Endothelial cell of umbilical vein (primary cell): ENCODE measurements at regions of chr2 and their contacts with region 1.

Region 1: GRCh38 chr2:144332356-144333142 is 187.4 kb downstream of the ZEB2 start:
- DNase-seq: peak; percentile 88
- H3K4me3 ChIP-seq: peak overlapping the region; percentile 49 to 71 (median 60)
- H3K27ac ChIP-seq: peak overlapping the region; percentile 85
- H3K4me1 ChIP-seq: peaks cover 15% of the 10 kb centered on the region
- H3K27me3 ChIP-seq: no peaks in the 10 kb centered on the region
- CTCF ChIP-seq: no peak
- POLR2A ChIP-seq: peak; percentile 79

Region 2: DNA sequence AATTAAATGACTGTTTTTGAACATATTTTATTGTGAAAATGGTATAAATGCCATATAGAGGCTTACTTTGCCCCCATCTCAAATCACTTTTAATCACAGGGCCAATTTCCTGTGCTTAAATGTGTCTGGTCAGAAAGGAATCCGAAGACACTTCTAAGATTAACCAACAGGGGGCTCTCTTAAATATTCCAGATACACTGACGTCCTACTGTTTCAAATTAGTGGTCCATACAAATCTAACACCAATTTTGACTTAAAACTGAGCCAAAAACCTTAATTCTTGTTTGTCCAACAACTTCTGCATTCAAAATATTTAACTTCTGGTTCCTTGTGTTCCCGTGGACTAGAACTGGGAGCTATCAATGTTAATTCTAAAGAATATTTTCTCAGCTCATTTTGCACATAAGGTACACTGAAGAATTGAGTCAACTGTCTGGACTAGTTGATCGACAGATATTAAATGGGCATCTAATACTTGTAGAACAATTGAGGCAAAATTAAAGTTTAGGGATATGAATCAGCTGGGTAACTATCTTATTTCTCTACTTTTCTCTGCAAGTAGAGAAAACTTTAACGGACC is 645.9 kb before region 1 on chr2:
- CTCF ChIA-PET with region 1: no interaction called
- POLR2A ChIA-PET with region 1: no interaction called
- dilution Hi-C with region 1: no loop called
- intact Hi-C with region 1: loop called (anchors 1 kb)
- DNase-seq: peak; percentile 60
- H3K4me3 ChIP-seq: no peak overlapping the region
- H3K27ac ChIP-seq: no peak overlapping the region
- H3K4me1 ChIP-seq: no peaks in the 10 kb centered on the region
- H3K27me3 ChIP-seq: no peaks in the 10 kb centered on the region
- CTCF ChIP-seq: peak; percentile 32 to 52
- POLR2A ChIP-seq: no peak

Region 3: DNA sequence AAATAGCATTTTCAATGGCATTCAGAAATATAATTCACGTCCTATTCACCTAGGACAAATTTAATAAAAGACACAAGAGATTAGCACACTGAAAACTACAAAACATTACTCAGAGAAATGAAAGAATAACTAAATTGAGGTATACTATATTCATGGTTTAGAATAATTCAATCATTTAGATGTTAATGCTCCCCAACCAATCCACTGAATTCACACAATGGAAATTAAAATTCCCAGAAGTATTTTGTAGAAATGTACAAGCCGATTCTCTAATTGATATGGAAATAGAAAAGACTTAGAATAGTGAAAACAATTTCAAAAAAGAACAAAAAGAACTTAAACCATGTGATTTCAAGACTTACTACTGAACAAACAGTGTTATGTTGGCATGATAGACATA is 24.8 kb before region 1 on chr2:
- CTCF ChIA-PET with region 1: no interaction called
- POLR2A ChIA-PET with region 1: no interaction called
- dilution Hi-C with region 1: no loop called
- intact Hi-C with region 1: no loop called
- DNase-seq: no peak
- H3K4me3 ChIP-seq: no peak overlapping the region
- H3K27ac ChIP-seq: no peak overlapping the region
- H3K4me1 ChIP-seq: no peaks in the 10 kb centered on the region
- H3K27me3 ChIP-seq: no peaks in the 10 kb centered on the region
- CTCF ChIP-seq: no peak
- POLR2A ChIP-seq: no peak

Region 4: DNA sequence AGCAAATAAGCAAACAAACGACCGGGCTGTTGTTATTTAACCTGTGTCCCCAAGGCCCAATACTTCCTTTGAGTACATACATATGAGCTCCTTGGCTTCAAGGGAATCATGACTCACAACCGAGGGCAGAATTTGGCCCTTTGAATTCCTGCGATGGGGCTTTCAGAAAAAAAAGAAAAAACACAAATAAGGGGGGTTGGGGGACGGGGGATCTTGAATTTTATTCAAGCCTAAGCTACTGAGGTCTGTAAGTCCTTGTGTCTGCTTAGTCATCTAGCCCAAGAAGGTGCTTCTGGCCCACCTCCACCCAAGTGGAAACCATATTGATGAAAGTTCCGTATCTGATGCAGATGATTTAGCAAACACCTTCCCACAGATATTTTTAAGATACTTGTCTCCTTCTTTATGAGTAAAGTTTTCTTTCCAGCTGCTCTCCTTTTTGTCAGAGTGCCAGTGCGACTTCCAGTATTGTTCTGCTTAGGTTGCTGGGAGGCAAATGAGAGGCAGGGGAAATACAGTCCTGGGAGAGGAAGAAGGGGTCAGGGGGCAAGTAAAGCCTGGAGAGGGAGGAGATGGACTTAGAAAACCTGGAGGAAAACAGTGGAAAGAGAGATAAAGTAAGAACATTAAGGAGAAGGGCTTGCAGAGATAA is 17.7 kb after region 1 on chr2:
- CTCF ChIA-PET with region 1: no interaction called
- POLR2A ChIA-PET with region 1: no interaction called
- dilution Hi-C with region 1: no loop called
- intact Hi-C with region 1: loop called (anchors 1 kb)
- DNase-seq: peak; percentile 99
- H3K4me3 ChIP-seq: peak overlapping the region in 2 of 3 experiments; percentile 0 to 9
- H3K27ac ChIP-seq: peak overlapping the region; percentile 79
- H3K4me1 ChIP-seq: peaks cover 32% of the 10 kb centered on the region
- H3K27me3 ChIP-seq: no peaks in the 10 kb centered on the region
- CTCF ChIP-seq: no peak
- POLR2A ChIP-seq: no peak

Region 5: GRCh38 chr2:144357623-144358373 is 25.2 kb after region 1 on chr2:
- CTCF ChIA-PET with region 1: no interaction called
- POLR2A ChIA-PET with region 1: no interaction called
- dilution Hi-C with region 1: no loop called
- intact Hi-C with region 1: loop called (anchors 1 kb)
- DNase-seq: peak; percentile 92
- H3K4me3 ChIP-seq: no peak overlapping the region
- H3K27ac ChIP-seq: peak overlapping the region; percentile 82
- H3K4me1 ChIP-seq: peaks cover 15% of the 10 kb centered on the region
- H3K27me3 ChIP-seq: no peaks in the 10 kb centered on the region
- CTCF ChIP-seq: no peak
- POLR2A ChIP-seq: no peak

Region 6: DNA sequence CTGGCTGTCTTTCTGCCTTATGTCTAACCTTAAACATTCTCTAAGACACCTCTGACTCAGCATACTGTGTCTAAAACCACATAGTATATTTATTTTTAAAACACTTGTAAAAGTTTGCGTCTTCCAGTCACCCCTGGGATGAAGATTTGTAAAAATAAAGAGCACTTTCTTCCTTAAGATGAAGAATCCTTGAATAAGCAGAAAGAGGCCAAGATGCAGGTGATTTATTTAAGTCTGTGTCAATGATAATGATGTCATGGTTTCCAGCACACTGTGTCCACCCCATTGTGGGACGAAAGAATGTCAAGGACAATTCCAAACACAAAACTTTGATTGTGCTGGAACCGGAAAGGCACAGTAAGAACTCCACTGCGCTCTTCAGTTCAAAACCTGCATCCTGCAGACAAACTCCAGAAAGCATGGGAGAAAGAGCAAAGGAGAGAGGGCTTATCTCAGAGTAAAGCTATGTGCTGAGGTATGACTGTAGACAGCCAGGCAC is 94.5 kb after region 1 on chr2:
- CTCF ChIA-PET with region 1: no interaction called
- POLR2A ChIA-PET with region 1: no interaction called
- dilution Hi-C with region 1: no loop called
- intact Hi-C with region 1: loop called (anchors 2 kb)
- DNase-seq: peak; percentile 82
- H3K4me3 ChIP-seq: no peak overlapping the region
- H3K27ac ChIP-seq: peak overlapping the region; percentile 76
- H3K4me1 ChIP-seq: peaks cover 16% of the 10 kb centered on the region
- H3K27me3 ChIP-seq: no peaks in the 10 kb centered on the region
- CTCF ChIP-seq: no peak
- POLR2A ChIP-seq: no peak

Region 7: DNA sequence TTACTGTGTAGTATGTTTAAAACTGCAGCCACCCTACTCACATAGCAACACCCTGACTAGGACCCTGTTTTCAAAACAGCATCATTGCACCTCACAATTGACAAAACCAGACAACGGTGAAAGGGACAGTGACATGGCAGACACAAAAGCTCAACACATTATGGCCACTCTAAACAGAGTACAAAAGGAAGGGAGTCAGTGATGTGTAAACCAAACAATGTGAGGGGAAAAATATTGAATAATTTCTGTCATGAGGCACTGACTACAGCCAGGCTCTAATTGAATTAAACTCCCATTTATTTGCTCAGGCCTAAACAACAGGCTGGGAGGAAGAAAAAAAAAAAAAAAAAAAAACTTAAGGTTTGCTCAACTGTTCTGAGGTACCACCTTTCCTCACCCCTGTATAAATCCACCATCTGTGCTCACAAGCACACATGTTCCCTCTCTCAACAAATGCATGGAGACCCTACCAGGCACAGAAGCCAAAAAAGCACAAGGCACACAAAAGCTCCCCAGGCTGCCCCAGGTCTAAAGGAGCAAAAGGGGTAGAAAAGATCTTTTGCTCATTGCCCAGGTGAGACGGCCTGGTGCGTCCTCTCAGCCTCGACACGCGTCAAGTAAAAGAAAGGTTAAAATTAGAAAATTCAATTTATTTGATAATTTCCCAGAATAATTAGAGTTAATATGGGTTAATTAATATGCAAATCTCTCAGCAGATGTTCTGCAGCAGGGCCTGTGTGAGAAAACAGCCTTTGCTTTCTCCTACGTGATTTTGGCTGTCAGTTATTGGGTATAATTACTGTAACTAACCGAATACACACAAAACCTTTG is 106.5 kb after region 1 on chr2:
- CTCF ChIA-PET with region 1: no interaction called
- POLR2A ChIA-PET with region 1: no interaction called
- dilution Hi-C with region 1: no loop called
- intact Hi-C with region 1: no loop called
- DNase-seq: no peak
- H3K4me3 ChIP-seq: no peak overlapping the region
- H3K27ac ChIP-seq: no peak overlapping the region
- H3K4me1 ChIP-seq: peaks cover 12% of the 10 kb centered on the region
- H3K27me3 ChIP-seq: no peaks in the 10 kb centered on the region
- CTCF ChIP-seq: no peak
- POLR2A ChIP-seq: no peak

Region 8: DNA sequence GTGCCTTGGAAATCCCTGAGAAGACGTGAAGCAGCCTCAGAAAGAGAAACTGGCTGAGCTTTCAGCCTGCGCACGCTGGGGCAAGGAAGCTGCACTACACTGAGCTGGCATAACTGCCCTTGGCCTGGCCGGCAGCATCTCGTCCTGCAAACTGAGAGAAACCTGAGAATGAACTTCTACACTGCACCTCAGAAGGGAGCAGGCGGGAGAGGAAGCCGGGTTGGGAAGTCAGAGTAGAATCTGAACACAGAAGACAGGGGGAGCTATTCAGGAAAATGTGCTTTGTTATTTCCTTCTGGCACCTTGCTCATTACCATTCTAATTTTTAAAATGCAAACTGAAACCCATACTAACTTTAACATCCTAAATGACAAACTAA is 116.5 kb after region 1 on chr2:
- CTCF ChIA-PET with region 1: no interaction called
- POLR2A ChIA-PET with region 1: no interaction called
- dilution Hi-C with region 1: no loop called
- intact Hi-C with region 1: loop called (anchors 1 kb)
- DNase-seq: no peak
- H3K4me3 ChIP-seq: no peak overlapping the region
- H3K27ac ChIP-seq: no peak overlapping the region
- H3K4me1 ChIP-seq: peaks cover 26% of the 10 kb centered on the region
- H3K27me3 ChIP-seq: no peaks in the 10 kb centered on the region
- CTCF ChIP-seq: peak; percentile 8 to 12
- POLR2A ChIP-seq: no peak

Region 9: DNA sequence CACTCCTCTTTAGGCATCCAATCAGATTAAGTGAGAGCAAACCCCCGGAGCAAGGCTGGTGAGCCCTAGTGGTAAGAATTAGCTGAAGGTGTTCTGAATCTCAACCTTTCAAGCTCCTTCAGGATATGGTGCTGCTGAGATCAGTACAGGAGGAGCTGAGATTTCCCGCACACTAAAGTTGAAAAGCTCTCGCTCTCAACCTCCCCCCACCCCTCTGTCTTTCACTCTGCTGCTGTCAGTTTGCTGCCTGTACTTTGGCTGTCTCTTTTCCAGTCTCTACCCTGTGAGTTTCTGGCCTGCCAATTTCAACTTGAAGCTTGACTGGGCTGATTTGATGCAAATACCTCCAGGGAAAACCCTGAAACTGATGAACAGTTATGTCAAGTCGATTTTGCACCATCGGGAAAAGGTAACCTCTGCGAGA is 171.7 kb after region 1 on chr2:
- CTCF ChIA-PET with region 1: no interaction called
- POLR2A ChIA-PET with region 1: no interaction called
- dilution Hi-C with region 1: no loop called
- intact Hi-C with region 1: no loop called
- DNase-seq: no peak
- H3K4me3 ChIP-seq: no peak overlapping the region
- H3K27ac ChIP-seq: no peak overlapping the region
- H3K4me1 ChIP-seq: peaks cover 9% of the 10 kb centered on the region
- H3K27me3 ChIP-seq: no peaks in the 10 kb centered on the region
- CTCF ChIP-seq: no peak
- POLR2A ChIP-seq: no peak

Region 10: DNA sequence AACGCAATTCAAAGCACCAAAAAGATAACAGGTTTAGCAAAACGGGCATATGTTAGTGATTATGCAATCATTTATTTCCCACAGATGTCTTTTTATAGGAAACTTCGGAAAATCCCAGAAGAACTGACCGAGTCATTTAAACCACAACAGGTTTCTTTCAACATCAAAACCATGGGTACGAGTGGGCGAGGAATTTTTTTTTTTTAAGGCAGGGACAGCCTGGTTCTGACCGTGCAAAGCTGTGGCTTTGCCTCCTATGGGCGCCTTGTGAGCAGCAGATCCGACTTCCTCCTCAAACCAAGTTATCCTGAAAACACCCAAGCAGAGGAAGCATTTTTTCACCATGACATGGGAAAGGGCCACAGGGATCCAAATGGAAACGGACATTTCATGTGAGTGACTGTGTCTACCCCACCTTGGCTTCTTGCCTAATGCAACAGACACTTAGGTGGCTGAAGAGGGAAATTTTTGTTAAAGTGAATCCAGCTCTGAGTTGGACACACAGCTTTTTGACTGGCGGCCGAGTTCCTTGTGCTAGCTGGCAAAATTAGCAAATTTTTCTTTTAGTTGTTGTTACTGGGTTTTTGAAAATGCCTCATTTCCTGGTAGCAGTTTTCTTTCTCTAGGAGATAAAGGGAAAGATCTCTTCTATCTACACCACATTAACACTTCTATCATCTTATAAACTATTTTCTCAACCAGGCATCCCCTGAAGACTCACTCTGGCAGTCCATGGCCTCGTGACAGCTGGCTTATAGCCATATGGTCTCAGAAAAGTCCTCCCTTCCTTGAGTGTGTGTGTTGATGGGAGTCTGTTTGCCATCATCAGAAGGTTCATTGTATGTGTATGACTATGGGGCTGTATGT is 674.8 kb after region 1 on chr2:
- CTCF ChIA-PET with region 1: no interaction called
- POLR2A ChIA-PET with region 1: no interaction called
- dilution Hi-C with region 1: no loop called
- intact Hi-C with region 1: loop called (anchors 5 kb)
- DNase-seq: peak; percentile 91
- H3K4me3 ChIP-seq: peak overlapping the region in 1 of 3 experiments; percentile 3
- H3K27ac ChIP-seq: peak overlapping the region; percentile 80
- H3K4me1 ChIP-seq: peaks cover 38% of the 10 kb centered on the region
- H3K27me3 ChIP-seq: no peaks in the 10 kb centered on the region
- CTCF ChIP-seq: no peak
- POLR2A ChIP-seq: no peak

Region 11: GRCh38 chr2:145584353-145584752 is 1251.8 kb after region 1 on chr2:
- CTCF ChIA-PET with region 1: no interaction called
- POLR2A ChIA-PET with region 1: no interaction called
- dilution Hi-C with region 1: no loop called
- intact Hi-C with region 1: no loop called
- DNase-seq: no peak
- H3K4me3 ChIP-seq: no peak overlapping the region
- H3K27ac ChIP-seq: no peak overlapping the region
- H3K4me1 ChIP-seq: no peaks in the 10 kb centered on the region
- H3K27me3 ChIP-seq: no peaks in the 10 kb centered on the region
- CTCF ChIP-seq: no peak
- POLR2A ChIP-seq: no peak